ENCODE measurements at regions of chr6 and their contacts with region 1.

Region 1: DNA sequence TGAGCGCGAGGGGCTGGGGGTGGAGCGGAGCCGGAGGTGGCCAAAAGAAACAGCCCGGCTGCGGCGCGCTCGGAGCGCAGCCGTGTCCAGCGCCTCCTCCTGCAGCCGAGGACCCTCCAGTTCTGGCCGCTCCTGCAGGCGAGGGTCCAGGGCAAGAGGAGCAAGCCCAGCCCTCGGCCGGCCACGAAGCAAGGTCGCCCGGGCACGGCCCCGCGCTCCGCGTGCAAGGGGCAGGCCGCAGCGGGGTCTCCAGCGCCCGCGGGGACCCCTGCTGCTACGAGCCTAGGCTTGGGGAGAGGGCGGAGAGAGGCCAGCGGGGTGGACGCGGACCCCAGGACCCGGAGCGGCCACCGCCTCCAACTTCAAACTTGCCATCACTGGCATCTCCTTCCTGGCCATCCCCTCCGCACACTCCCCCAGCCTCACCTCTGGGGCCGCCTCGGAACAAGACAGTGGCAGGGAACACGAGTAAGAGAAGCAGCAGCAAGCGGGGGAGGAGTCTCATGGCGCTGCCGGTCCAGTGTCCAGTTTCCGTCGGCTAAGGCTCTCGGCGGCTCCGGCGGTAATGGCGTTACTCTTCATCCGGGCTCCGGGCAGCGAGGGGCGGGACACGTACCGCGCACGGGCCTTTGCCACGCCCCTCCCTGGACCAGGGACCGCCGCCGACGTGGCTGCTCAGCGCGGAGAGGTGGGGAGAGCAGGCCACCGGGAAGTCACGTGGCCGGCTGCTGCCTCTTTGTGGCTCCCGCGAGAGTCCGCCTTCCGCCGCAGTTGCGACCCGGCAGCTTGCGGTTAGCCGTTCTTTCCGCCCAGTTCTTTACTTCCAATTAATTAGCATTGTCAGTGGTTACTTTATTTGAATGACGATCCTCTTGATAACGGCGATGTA is at the start of gene SSR1:
- DNase-seq: peak; percentile 96
- H3K4me3 Mint-ChIP-seq: peak within 1 kb of the TSS; percentile 92
- H3K27ac Mint-ChIP-seq: peak within 1 kb of the TSS; percentile 94
- H3K4me1 Mint-ChIP-seq: peaks cover 40% of the 10 kb centered on the region
- H3K27me3 Mint-ChIP-seq: no peaks in the 10 kb centered on the region
- total RNA-seq, gene SSR1: 116 to 121 TPM

Region 2: DNA sequence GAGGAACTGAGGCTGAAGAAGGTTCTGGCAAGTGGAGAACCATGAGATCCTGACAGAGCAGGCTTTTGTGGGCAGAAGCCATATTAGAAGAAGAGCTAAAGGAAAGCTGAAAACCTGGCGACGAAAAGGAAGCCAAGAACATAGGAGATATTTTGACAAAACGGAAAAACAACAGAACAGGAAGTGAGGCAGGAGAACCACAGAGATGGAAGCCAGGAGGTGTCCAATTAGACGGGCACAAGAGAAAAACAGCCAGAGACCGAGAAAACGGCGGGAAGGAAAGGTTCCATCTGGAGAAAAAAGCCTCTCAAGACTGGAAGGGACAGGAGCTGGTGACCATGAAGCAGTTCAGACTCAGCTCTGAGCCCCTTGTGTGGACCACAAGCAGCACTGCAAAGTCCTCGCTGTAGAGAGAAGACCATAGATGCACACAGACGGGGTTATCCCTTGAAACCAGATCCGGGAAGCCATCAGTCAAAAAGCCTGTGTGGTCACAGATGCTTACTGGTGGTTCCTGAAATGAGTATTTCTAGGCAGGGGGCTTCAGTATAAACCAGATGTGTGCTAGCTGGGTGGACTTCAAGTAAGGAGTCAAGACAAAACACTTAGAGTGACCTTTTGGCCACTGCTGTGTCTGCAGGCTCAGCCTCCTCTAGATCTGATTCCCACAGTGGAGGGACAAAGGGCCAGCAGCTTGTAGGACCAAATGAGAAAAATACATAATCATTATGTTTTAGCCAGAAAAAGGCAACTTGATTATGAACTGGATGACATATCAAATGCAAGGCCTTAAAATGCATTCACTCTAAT is 30.6 kb before region 1 on chr6:
- CTCF ChIA-PET with region 1: interaction called, 4 read pairs
- intact Hi-C with region 1: loop called (anchors 2 kb)
- DNase-seq: peak; percentile 36
- H3K4me3 Mint-ChIP-seq: no peak overlapping the region
- H3K27ac Mint-ChIP-seq: peak overlapping the region; percentile 55
- H3K4me1 Mint-ChIP-seq: peaks cover 19% of the 10 kb centered on the region
- H3K27me3 Mint-ChIP-seq: no peaks in the 10 kb centered on the region

Region 3: GRCh38 chr6:7589949-7590917 is 277.4 kb after region 1 on chr6 and contains the start of gene SNRNP48:
- CTCF ChIA-PET with region 1: no interaction called
- intact Hi-C with region 1: loop called (anchors 1 kb)
- DNase-seq: peak; percentile 96
- H3K4me3 Mint-ChIP-seq: peak within 1 kb of the TSS; percentile 95
- H3K27ac Mint-ChIP-seq: peak within 1 kb of the TSS; percentile 91
- H3K4me1 Mint-ChIP-seq: peaks cover 39% of the 10 kb centered on the region
- H3K27me3 Mint-ChIP-seq: no peaks in the 10 kb centered on the region
- total RNA-seq, gene SNRNP48: 22.7 to 22.8 TPM

Region 4: DNA sequence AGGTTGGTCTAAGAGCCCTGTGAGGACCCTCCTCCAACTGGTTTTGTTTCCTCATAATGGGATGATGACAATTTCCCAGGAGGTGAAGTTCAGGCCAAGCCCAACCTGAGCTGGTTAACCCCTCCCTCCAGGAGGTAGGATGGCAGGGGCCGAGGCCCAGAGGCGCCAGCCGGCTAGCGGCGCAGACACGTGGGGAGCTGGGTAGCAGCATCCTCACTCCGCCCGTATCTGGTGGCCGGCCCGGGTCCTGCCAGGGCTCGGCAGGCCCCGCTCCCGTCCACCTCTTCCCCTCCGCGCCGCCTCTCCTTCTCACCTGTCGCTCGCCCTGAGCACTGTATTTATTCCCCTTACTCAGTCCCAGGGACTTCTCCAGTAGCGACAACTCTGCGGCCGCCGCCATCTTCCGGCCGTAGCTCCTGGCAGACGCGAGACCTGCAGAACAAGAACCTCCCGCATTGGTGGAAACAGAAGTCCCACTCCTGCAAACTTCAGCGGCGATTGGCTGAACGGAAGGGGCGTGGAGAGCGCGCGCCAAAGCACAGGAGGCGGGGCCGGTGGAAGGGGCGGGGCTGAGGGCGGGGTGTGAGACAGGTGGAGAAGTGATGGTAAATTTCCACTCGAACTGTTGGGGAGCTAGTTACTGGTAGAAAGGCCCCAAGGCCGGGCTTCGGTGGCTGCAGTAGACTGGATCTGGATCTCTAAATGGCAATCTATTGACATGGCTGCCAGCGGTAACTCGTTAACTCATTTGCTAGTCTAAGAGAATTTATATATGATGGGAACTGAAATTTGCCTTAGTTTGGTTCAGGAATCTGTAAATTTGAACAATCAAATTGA is 789.5 kb after region 1 on chr6 and contains the start of gene EEF1E1:
- CTCF ChIA-PET with region 1: no interaction called
- intact Hi-C with region 1: loop called (anchors 1 kb)
- DNase-seq: peak; percentile 99
- H3K4me3 Mint-ChIP-seq: peak within 1 kb of the TSS; percentile 96
- H3K27ac Mint-ChIP-seq: peak within 1 kb of the TSS; percentile 92
- H3K4me1 Mint-ChIP-seq: peaks cover 35% of the 10 kb centered on the region
- H3K27me3 Mint-ChIP-seq: peaks cover 16% of the 10 kb centered on the region
- total RNA-seq, gene EEF1E1: 65.2 to 71.2 TPM

Measured in activated naive CD4-positive, alpha-beta T cell treated with anti-CD3 and anti-CD28 coated beads for 36 hours (primary cell).